ENCODE measurements at regions of chr14 and their contacts with region 1.

Region 1: DNA sequence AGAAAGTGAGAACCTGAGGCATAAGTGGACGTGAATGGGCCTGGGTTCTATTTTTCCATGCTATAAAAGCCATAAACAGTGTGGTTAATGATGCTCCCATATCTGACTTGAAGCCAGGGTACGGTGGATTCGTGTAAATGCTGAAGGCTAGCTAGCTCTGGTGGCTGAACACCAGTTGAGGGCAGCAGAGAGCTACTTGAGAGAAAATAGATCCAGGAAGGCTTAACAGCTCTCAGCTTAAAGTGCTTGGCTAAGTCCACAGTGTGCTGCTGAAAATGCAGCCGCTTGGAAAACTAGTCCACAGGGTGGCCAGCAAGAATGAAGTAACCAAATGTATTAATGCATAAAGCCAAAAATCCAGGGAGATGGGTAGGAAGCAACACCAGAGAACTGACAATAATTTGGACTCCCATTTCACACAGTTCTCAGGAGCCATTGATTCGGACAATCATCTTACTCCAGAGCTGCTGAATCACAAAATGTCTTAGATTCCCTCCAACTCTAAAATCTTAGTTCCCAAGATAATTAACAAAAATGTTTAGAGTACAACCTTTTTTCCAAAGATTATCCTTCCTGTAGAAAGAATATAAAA is 15.0 kb upstream of the FOXG1 start:
- ATAC-seq: peak; percentile 59 to 93 (median 76)
- H3K4me3 ChIP-seq: no peak overlapping the region
- H3K27ac ChIP-seq: no peak overlapping the region
- H3K4me1 ChIP-seq: no peaks in the 10 kb centered on the region

Region 2: DNA sequence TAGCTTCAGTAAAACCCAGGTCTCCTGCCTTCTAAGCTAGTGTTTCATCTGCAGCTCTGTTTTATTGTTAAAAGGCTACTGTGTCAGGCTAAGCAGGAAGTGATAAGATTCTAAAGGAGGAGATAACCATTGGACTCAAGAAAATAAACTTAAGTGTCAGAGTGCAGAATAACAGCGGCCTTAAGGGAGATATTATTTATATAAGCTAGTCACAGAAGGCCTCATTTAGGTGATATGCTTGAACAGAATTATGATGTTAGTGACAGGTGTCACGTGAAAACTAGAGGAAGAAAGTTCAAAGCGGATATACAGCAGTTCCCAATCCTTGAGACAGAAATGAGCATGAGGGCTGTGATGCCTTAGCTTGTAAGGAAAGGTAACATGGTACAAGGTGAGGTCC is 388.5 kb after region 1 on chr14:
- in situ Hi-C with region 1: no loop called
- ATAC-seq: no peak
- H3K4me3 ChIP-seq: no peak overlapping the region
- H3K27ac ChIP-seq: no peak overlapping the region
- H3K4me1 ChIP-seq: no peaks in the 10 kb centered on the region

Region 3: GRCh38 chr14:29242755-29243754 is 491.5 kb after region 1 on chr14:
- in situ Hi-C with region 1: loop called in 1 of 9 experiments (anchors 25 kb)
- ATAC-seq: peak in 5 of 8 experiments; percentile 24 to 64 (median 53)
- H3K4me3 ChIP-seq: no peak overlapping the region
- H3K27ac ChIP-seq: no peak overlapping the region
- H3K4me1 ChIP-seq: peaks cover 0 to 10% of the 10 kb centered on the region in 2 donors

Region 4: GRCh38 chr14:29536886-29537511 is 785.4 kb after region 1 on chr14:
- in situ Hi-C with region 1: loop called in 6 of 9 experiments (anchors 10 to 25 kb)
- ATAC-seq: no peak
- H3K4me3 ChIP-seq: no peak overlapping the region
- H3K27ac ChIP-seq: no peak overlapping the region
- H3K4me1 ChIP-seq: no peaks in the 10 kb centered on the region

Region 5: GRCh38 chr14:30214461-30215090 is 1463.0 kb after region 1 on chr14:
- in situ Hi-C with region 1: loop called in 3 of 9 experiments (anchors 25 kb)
- ATAC-seq: peak in 7 of 8 experiments; percentile 40 to 73 (median 60)
- H3K4me3 ChIP-seq: no peak overlapping the region
- H3K27ac ChIP-seq: no peak overlapping the region
- H3K4me1 ChIP-seq: peaks cover 0 to 3% of the 10 kb centered on the region in 2 donors

Region 6: DNA sequence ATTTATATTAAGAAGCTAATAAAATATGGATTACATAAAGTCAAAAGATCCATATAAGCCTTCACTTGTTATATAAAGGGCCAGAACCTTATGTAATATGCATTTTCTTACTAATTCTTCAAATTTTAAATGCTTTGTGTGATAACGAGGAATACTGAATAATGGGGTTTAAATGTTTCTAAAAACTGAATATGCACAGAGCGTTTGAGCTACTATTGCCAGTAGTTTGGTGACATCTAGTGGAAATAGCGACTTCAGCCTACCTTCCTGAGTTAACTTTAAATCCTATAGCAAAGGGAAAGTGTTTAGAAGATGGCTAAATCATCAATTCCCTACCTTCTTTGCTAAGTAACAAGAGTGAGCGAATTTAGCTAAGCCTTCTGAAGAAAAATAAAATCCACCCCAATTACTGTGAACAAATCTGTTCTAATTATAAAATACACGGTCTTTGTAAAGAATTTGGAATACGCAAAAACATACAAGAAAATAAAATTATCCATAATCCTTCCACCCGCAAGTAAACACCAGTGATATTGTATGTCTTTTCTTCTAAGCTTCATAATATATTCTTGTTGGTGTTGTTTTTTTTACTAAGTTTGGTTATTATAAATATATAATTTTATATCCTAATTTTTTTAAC is 1691.9 kb after region 1 on chr14:
- in situ Hi-C with region 1: loop called in 2 of 9 experiments (anchors 25 kb)
- ATAC-seq: peak in 6 of 8 experiments; percentile 42 to 86 (median 56)
- H3K4me3 ChIP-seq: no peak overlapping the region
- H3K27ac ChIP-seq: no peak overlapping the region
- H3K4me1 ChIP-seq: peaks cover 8 to 12% of the 10 kb centered on the region in 2 donors